ENCODE measurements at regions of chr13 and their contacts with region 1.

Region 1: GRCh38 chr13:79637133-79637763 is 156.3 kb downstream of the NDFIP2 start:
- DNase-seq: peak; percentile 74 to 76
- ATAC-seq: peak; percentile 91 to 99 (median 96)
- H3K4me3 ChIP-seq: peak overlapping the region in 9 of 10 donors; percentile 7 to 40 (median 26)
- H3K27ac ChIP-seq: peak overlapping the region; percentile 12 to 78 (median 64)
- H3K4me1 ChIP-seq: peaks cover 0 to 28% (median 5%) of the 10 kb centered on the region in 9 donors
- H3K27me3 ChIP-seq: no peaks in the 10 kb centered on the region
- CTCF ChIP-seq: no peak

Region 2: GRCh38 chr13:79679334-79679733 is 42.1 kb after region 1 on chr13:
- intact Hi-C with region 1: loop called in 2 of 10 experiments (anchors 5 kb)
- DNase-seq: peak; percentile 44 to 77
- ATAC-seq: peak; percentile 53 to 76 (median 63)
- H3K4me3 ChIP-seq: no peak overlapping the region
- H3K27ac ChIP-seq: no peak overlapping the region
- H3K4me1 ChIP-seq: peaks cover 0 to 17% (median 0%) of the 10 kb centered on the region in 9 donors
- H3K27me3 ChIP-seq: no peaks in the 10 kb centered on the region
- CTCF ChIP-seq: peak; percentile 56 to 85 (median 78)

Measured in heart right ventricle (tissue), 16 donors.